ENCODE measurements at regions of chr12 and their contacts with region 1.

Region 1: DNA sequence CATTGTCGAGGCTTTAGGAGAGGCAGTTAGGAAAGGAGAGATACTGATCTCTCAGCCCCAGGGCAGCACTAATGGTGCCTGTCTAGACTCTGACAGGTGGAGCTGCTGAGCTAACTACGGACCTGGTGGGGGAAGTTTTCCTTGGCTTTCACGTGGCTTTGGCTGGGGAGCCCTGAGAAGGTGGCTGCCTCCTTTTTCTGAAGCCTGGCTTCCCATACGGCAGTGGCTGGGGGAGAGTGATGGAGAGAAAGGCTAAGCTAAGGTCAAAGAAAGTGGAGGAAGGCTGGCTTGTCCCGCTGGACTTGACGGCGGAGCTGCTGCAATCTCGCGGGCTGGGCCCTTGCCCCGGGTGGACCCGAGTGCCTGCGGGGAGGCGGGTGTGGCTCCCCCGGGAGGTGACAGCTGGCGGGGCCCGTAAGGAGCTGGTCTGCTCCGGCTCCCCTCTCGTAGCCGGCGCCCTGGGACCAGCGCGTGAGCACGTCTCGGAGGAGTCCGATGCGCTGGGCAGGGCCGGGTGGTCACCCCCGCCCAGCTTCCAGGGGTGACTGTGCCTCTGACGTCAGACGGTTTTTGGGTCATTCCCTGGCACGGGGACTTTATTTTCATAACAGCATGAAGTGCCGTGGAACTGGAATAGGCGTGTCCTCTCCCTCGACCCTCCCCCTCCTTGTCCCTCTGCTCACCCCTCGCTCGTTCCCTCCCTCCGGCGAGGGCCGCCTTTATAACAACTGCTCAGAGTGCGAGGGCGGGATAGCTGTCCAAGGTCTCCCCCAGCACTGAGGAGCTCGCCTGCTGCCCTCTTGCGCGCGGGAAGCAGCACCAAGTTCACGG is at the start of gene GPRC5A:
- DNase-seq: peak; percentile 90 to 99
- ATAC-seq: peak; percentile 87 to 89
- H3K4me3 ChIP-seq: peak within 1 kb of the TSS; percentile 54
- H3K27ac ChIP-seq: peak within 1 kb of the TSS; percentile 94
- H3K4me1 ChIP-seq: peaks cover 47% of the 10 kb centered on the region
- CTCF ChIP-seq: peak; percentile 40
- EP300 ChIP-seq: peak; percentile 61 to 79; a peak in 3 of 5 replicates
- POLR2A ChIP-seq: peak; percentile 99
- RAD21 ChIP-seq: peak; percentile 63 to 64
- polyA plus RNA-seq, gene GPRC5A: 296 and 321 TPM in 2 replicates

Region 2: GRCh38 chr12:12803186-12803585 is 87.8 kb before region 1 on chr12:
- CTCF ChIA-PET with region 1: interaction called, 3 read pairs
- POLR2A ChIA-PET with region 1: interaction called, 10 read pairs
- DNase-seq: peak; percentile 98 to 100
- ATAC-seq: peak; percentile 91 to 96
- H3K4me3 ChIP-seq: no peak overlapping the region
- H3K27ac ChIP-seq: peak overlapping the region; percentile 89 to 90
- H3K4me1 ChIP-seq: peaks cover 66% of the 10 kb centered on the region
- CTCF ChIP-seq: no peak
- EP300 ChIP-seq: peak; percentile 20 to 50; a peak in 2 of 5 replicates
- POLR2A ChIP-seq: peak; percentile 37; the same call in 1 of the 2 replicates
- RAD21 ChIP-seq: no peak

Region 3: DNA sequence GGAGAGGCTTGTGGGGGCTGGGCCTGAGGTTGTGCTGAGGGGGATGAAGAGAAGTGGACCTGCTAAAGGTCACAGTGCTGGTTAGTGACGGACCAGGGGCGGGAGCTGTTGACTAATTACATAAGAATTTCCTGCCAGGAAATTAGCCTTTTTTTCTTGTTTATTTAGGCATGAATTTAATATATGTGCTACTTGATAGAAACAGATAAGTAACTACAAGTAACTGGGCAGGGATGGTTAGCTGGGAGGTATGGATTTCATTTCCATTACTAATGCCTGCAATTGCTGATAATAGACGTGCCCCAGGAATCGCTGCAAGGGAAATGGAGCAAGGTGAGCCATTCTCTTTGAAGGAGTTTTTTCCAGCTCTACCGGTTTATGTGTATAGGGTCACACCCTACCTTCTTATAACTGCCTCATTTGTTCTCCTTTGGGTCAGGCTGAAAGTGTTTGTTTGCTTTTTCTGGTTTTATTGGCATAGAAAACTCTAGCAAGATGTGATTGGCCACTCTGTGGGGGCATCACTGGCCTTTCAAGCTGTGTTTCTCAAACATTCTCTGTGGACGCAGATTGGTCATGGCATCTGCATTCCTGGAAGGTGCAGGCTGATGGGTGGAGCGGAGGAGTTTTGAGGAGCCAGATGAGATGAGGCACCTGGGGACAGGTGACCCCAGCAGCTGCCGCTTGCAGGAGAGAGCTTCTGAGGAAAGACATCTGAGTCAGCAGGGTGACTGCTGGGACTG is 18.7 kb before region 1 on chr12:
- CTCF ChIA-PET with region 1: interaction called, 30 read pairs
- POLR2A ChIA-PET with region 1: interaction called, 28 read pairs
- DNase-seq: peak; percentile 71 to 95
- ATAC-seq: peak; percentile 75
- H3K4me3 ChIP-seq: peak overlapping the region; percentile 28
- H3K27ac ChIP-seq: peak overlapping the region; percentile 97 to 98
- H3K4me1 ChIP-seq: peaks cover 66% of the 10 kb centered on the region
- CTCF ChIP-seq: no peak
- EP300 ChIP-seq: peak; percentile 92 to 96; a peak in 4 of 5 replicates
- POLR2A ChIP-seq: no peak
- RAD21 ChIP-seq: peak in 1 of 2 experiments; percentile 32; a peak in 3 of 5 replicates

Region 4: GRCh38 chr12:12909228-12909994 is 18.4 kb after region 1 on chr12:
- CTCF ChIA-PET with region 1: interaction called, 10 read pairs
- POLR2A ChIA-PET with region 1: interaction called, 3 read pairs
- DNase-seq: no peak
- ATAC-seq: no peak
- H3K4me3 ChIP-seq: no peak overlapping the region
- H3K27ac ChIP-seq: peak overlapping the region in 1 of 2 experiments; percentile 60; a peak in 2 of 6 replicates
- H3K4me1 ChIP-seq: peaks cover 56% of the 10 kb centered on the region
- CTCF ChIP-seq: no peak
- EP300 ChIP-seq: no peak
- POLR2A ChIP-seq: no peak
- RAD21 ChIP-seq: no peak